Endothelial cell of umbilical vein (primary cell): ENCODE measurements at regions of chr13 and their contacts with region 1.

Region 1: DNA sequence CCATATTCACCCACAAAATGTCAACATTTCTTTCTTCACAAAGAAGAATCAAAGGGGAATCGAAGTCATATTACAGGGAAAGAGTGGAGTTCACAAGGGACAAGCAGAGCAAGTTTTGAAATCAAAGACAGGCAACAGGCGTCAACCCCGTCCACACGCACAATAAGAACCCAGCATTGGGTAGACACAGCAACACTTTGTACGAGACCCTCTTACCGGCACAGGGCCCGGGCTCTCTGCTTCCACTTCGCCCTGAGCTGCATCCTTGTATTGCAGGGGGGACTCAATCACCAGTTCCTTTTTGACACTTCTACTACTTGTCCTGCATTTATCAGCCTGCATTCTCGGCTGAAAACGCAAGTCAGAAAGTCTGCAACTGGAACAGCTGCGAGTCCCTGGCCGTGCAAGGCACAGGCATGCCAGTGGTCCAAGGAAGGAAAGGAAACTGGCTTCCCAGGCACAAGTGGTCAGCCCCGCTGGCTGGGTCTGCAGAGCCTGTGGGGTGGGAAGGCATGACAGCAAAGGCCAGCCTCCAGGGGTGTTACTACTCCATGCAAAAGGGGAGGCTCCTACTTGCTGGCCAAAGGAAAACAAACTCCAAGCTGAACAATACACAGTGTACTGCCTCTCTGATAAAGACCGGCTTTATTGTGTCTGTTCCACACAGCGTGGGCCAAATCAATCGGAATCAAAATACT is at the start of gene DOCK9:
- DNase-seq: peak; percentile 89
- H3K4me3 ChIP-seq: peak within 1 kb of the TSS; percentile 47 to 100 (median 86)
- H3K27ac ChIP-seq: peak within 1 kb of the TSS; percentile 97
- H3K4me1 ChIP-seq: peaks cover 52% of the 10 kb centered on the region
- H3K27me3 ChIP-seq: no peaks in the 10 kb centered on the region
- CTCF ChIP-seq: no peak
- POLR2A ChIP-seq: peak; percentile 87
- total RNA-seq, gene DOCK9: 323 and 334 TPM in 2 replicates

Region 2: DNA sequence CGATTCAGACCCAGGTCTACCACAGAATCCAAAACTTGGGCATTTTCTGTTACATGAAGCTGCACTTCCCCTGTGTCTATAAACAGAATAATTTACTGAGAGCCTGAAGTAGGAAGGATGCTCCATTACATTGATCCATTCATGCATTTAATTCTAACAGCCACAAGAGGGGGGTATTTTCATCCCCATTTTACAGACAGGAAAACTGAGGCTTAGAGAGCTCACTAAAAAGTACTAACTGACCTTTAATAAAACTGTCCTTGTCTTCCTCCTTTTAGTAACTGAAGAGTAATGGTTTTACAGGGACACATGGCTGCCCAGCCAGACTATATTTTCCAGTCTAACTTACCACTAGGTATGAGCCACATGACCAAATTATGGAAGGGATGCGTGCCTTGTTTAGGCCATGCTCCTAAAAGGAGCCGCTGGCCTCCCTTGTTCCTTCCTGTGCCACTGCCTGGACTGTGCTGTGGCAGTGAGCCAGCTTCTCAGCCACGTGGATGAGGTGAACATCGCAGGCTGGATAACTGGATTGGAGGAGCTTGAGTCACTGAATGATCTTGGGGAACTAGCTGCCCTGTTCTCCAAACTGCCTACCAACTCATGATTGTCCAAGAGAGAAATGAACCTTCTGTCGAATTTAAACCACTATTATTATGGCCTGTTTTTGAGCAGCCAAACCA is 108.2 kb before region 1 on chr13:
- CTCF ChIA-PET with region 1: interaction called, 10 read pairs
- POLR2A ChIA-PET with region 1: no interaction called
- dilution Hi-C with region 1: no loop called
- intact Hi-C with region 1: no loop called
- DNase-seq: peak; percentile 79
- H3K4me3 ChIP-seq: no peak overlapping the region
- H3K27ac ChIP-seq: no peak overlapping the region
- H3K4me1 ChIP-seq: no peaks in the 10 kb centered on the region
- H3K27me3 ChIP-seq: no peaks in the 10 kb centered on the region
- CTCF ChIP-seq: peak in 1 of 2 donors; percentile 14
- POLR2A ChIP-seq: no peak

Region 3: GRCh38 chr13:98890186-98890585 is 87.5 kb before region 1 on chr13:
- CTCF ChIA-PET with region 1: interaction called, 3 read pairs
- POLR2A ChIA-PET with region 1: interaction called, 3 read pairs
- dilution Hi-C with region 1: no loop called
- intact Hi-C with region 1: loop called (anchors 5 kb)
- DNase-seq: peak; percentile 47
- H3K4me3 ChIP-seq: no peak overlapping the region
- H3K27ac ChIP-seq: peak overlapping the region; percentile 1
- H3K4me1 ChIP-seq: peaks cover 51% of the 10 kb centered on the region
- H3K27me3 ChIP-seq: no peaks in the 10 kb centered on the region
- CTCF ChIP-seq: no peak
- POLR2A ChIP-seq: no peak

Region 4: DNA sequence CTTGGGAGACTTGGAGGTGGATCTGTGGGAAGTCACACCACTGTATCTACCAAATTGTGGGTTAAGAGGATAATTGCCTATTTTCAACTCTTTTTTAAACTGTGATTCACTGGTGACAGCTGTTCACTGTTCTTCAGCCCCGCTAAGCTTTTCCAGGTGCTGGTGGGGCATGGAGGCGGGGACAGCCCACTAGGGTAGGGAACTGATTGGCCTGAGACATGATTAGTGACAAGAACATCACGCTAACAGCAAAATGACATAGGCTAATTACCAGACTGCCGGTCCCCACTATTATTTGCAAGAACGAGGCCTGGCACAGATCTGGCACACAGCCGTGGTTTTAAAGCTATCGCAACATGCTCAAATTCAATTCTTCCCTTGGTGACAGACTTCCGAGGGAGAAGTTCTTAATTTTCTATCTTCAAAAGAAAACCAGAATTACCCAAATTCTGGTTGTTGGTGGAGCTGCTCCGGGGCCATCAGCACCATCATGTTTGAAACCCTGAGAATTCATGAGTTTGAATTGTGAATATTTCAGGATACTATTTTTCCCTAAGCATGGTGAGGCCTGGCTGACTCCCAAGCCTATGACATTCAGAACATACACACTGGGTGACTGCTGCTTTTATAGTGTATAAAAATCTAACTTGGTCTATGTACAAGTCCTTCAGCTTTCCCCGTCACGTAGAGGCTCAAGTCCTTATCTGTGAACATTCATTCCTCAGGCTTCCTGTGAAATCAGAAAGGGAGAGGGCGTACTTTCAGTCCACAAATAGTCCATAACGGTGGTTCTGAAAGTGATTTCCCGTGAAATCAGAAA is 17.7 kb before region 1 on chr13:
- CTCF ChIA-PET with region 1: interaction called, 17 read pairs
- POLR2A ChIA-PET with region 1: interaction called, 4 read pairs
- dilution Hi-C with region 1: no loop called
- intact Hi-C with region 1: loop called (anchors 1 kb)
- DNase-seq: peak; percentile 86
- H3K4me3 ChIP-seq: no peak overlapping the region
- H3K27ac ChIP-seq: peak overlapping the region; percentile 78
- H3K4me1 ChIP-seq: peaks cover 39% of the 10 kb centered on the region
- H3K27me3 ChIP-seq: no peaks in the 10 kb centered on the region
- CTCF ChIP-seq: no peak
- POLR2A ChIP-seq: no peak

Region 5: DNA sequence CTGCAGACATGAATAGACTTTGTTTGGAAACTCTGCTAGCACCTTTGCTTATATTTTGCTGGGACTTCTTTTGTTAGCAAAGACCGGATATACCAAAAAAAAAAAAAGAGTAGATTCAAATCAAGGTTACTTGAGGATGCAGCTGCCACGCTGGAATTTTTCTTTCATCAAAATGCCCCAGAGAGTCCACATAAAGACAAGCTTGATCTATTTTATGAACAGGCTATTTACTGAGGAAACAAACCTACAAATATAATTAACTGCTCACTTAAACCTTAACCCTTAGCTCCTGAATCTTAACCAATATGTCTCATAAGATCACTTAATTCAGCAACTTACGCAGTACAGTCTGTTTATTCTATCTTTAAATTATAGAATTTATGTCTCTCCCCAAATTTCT is 27.3 kb after region 1 on chr13:
- CTCF ChIA-PET with region 1: interaction called, 3 read pairs
- POLR2A ChIA-PET with region 1: interaction called, 4 read pairs
- dilution Hi-C with region 1: no loop called
- intact Hi-C with region 1: loop called (anchors 1 kb)
- DNase-seq: peak; percentile 75
- H3K4me3 ChIP-seq: no peak overlapping the region
- H3K27ac ChIP-seq: peak overlapping the region; percentile 30
- H3K4me1 ChIP-seq: peaks cover 39% of the 10 kb centered on the region
- H3K27me3 ChIP-seq: no peaks in the 10 kb centered on the region
- CTCF ChIP-seq: no peak
- POLR2A ChIP-seq: no peak

Region 6: GRCh38 chr13:99062593-99062992 is 84.9 kb after region 1 on chr13:
- CTCF ChIA-PET with region 1: no interaction called
- POLR2A ChIA-PET with region 1: no interaction called
- dilution Hi-C with region 1: no loop called
- intact Hi-C with region 1: no loop called
- DNase-seq: peak; percentile 96
- H3K4me3 ChIP-seq: peak overlapping the region in 1 of 3 experiments; percentile 46
- H3K27ac ChIP-seq: peak overlapping the region; percentile 59
- H3K4me1 ChIP-seq: peaks cover 38% of the 10 kb centered on the region
- H3K27me3 ChIP-seq: no peaks in the 10 kb centered on the region
- CTCF ChIP-seq: no peak
- POLR2A ChIP-seq: no peak

Region 7: GRCh38 chr13:99087096-99087953 is 109.6 kb after region 1 on chr13:
- CTCF ChIA-PET with region 1: no interaction called
- POLR2A ChIA-PET with region 1: no interaction called
- dilution Hi-C with region 1: no loop called
- intact Hi-C with region 1: loop called (anchors 5 kb)
- DNase-seq: peak; percentile 88
- H3K4me3 ChIP-seq: peak overlapping the region; percentile 61 to 65 (median 63)
- H3K27ac ChIP-seq: peak overlapping the region; percentile 20
- H3K4me1 ChIP-seq: peaks cover 19% of the 10 kb centered on the region
- H3K27me3 ChIP-seq: no peaks in the 10 kb centered on the region
- CTCF ChIP-seq: peak in 1 of 2 donors; percentile 45
- POLR2A ChIP-seq: no peak

Region 8: DNA sequence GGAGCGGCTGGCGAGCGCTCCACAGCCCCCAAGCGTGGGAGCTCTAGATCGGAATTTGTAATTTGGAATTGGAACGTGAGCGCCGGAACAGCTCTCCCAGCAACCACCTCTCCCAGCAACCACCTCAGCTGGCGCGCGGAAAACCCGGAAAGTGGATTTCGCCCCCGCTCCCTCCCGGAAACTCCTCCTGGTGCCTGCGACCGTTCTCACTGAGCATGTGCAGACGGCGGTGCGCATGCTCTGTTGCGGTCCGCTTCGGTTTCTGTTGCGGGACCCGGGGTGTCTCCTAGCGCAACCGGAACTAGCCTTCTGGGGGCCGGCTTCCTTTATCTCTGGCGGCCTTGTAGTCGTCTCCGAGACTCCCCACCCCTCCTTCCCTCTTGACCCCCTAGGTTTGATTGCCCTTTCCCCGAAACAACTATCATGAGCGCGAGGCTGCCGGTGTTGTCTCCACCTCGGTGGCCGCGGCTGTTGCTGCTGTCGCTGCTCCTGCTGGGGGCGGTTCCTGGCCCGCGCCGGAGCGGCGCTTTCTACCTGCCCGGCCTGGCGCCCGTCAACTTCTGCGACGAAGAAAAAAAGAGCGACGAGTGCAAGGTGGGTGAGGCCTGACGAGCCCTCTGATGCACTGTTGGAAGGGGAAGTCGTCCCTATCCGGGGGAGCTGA is 523.6 kb after region 1 on chr13 and contains the start of gene TM9SF2:
- CTCF ChIA-PET with region 1: no interaction called
- POLR2A ChIA-PET with region 1: no interaction called
- dilution Hi-C with region 1: no loop called
- intact Hi-C with region 1: no loop called
- DNase-seq: peak; percentile 95
- H3K4me3 ChIP-seq: peak within 1 kb of the TSS; percentile 91 to 96 (median 91)
- H3K27ac ChIP-seq: peak within 1 kb of the TSS; percentile 68
- H3K4me1 ChIP-seq: peaks cover 34% of the 10 kb centered on the region
- H3K27me3 ChIP-seq: no peaks in the 10 kb centered on the region
- CTCF ChIP-seq: no peak
- POLR2A ChIP-seq: peak; percentile 74
- total RNA-seq, gene TM9SF2: 85.9 and 90.0 TPM in 2 replicates